ENCODE measurements at regions of chr7 and their contacts with region 1.

Region 1: DNA sequence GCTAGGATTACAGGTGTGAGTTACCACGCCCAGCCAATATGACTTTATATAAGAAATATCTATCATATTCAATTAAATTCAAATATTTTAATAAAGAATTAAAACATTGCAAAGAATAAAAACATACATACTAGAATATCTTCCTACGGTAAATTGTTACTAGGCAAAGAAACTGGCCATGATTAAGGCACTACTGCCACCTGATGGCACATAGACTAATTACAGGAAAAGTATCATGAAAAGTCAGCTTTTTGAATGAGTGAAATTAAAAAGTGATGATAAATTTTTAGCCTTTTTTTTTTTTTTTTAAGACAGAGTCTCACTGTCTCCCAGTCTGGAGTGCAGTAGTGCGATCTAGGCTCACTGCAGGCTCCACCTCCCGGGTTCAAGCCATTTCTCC is 30.9 kb downstream of the MRPS33 start:
- DNase-seq: no peak
- H3K4me3 ChIP-seq: no peak overlapping the region
- H3K27ac ChIP-seq: no peak overlapping the region
- H3K4me1 ChIP-seq: no peaks in the 10 kb centered on the region
- H3K27me3 ChIP-seq: no peaks in the 10 kb centered on the region
- CTCF ChIP-seq: peak in 2 of 3 experiments; percentile 32 to 48; a peak in 2 of 4 replicates
- EP300 ChIP-seq: no peak
- POLR2A ChIP-seq: no peak
- RAD21 ChIP-seq: peak; percentile 71 to 76

Region 2: GRCh38 chr7:140691368-140692045 is 292.3 kb before region 1 on chr7:
- CTCF ChIA-PET with region 1: interaction called, 12 read pairs
- POLR2A ChIA-PET with region 1: no interaction called
- DNase-seq: no peak
- H3K4me3 ChIP-seq: no peak overlapping the region
- H3K27ac ChIP-seq: no peak overlapping the region
- H3K4me1 ChIP-seq: peaks cover 0 to 3% (median 1%) of the 10 kb centered on the region in 4 experiments; a peak in 2 of 7 replicates
- H3K27me3 ChIP-seq: no peaks in the 10 kb centered on the region
- CTCF ChIP-seq: peak; percentile 50 to 67 (median 61)
- EP300 ChIP-seq: no peak
- POLR2A ChIP-seq: no peak
- RAD21 ChIP-seq: peak; percentile 57 to 71

Region 3: GRCh38 chr7:140726281-140726680 is 257.5 kb before region 1 on chr7:
- CTCF ChIA-PET with region 1: interaction called, 11 read pairs
- POLR2A ChIA-PET with region 1: interaction called, 4 read pairs
- DNase-seq: no peak
- H3K4me3 ChIP-seq: no peak overlapping the region
- H3K27ac ChIP-seq: no peak overlapping the region
- H3K4me1 ChIP-seq: no peaks in the 10 kb centered on the region
- H3K27me3 ChIP-seq: no peaks in the 10 kb centered on the region
- CTCF ChIP-seq: peak in 2 of 3 experiments; percentile 21 to 51; a peak in 1 of 4 replicates
- EP300 ChIP-seq: no peak
- POLR2A ChIP-seq: no peak
- RAD21 ChIP-seq: peak; percentile 50 to 60

Region 4: GRCh38 chr7:140745266-140746058 is 238.3 kb before region 1 on chr7:
- CTCF ChIA-PET with region 1: interaction called, 14 read pairs
- POLR2A ChIA-PET with region 1: no interaction called
- DNase-seq: no peak
- H3K4me3 ChIP-seq: no peak overlapping the region
- H3K27ac ChIP-seq: no peak overlapping the region
- H3K4me1 ChIP-seq: no peaks in the 10 kb centered on the region
- H3K27me3 ChIP-seq: no peaks in the 10 kb centered on the region
- CTCF ChIP-seq: no peak
- EP300 ChIP-seq: no peak
- POLR2A ChIP-seq: no peak
- RAD21 ChIP-seq: no peak

Region 5: DNA sequence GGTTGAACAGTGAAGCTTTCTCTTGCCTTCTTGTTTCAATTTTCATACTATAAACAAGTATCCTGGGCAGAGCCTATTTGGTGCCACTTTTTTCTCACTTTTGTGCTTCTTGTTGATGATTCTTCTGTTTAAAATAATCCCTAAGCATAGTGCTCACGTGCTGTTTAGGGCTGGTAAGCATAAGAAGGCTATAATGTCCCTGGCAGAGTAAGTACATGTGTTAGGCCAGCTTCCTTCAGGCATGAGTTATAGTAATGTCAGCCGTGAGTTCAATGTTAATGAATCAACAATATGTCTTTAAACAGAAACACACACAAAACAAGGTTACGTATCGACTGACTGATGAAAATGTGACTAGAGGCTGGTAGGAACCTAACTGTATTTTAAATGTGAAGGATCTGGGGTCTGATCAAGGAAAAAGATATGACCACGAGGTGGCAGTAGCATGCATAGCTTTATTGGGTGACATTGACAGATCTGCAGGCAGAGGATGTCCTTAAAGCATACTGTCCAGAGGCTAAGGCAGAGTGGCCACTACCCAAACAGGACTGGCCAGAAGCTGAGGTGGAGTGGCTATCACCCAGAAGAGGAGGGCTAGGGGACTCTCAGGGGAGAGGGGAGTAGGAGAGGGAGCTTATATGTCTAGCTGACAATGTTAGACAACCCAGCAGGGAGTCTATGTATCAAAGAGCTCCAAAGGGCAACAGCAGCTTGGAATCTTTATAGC is 172.8 kb before region 1 on chr7:
- CTCF ChIA-PET with region 1: interaction called, 34 read pairs
- POLR2A ChIA-PET with region 1: interaction called, 3 read pairs
- DNase-seq: peak in 1 of 2 experiments; percentile 73
- H3K4me3 ChIP-seq: no peak overlapping the region
- H3K27ac ChIP-seq: no peak overlapping the region
- H3K4me1 ChIP-seq: no peaks in the 10 kb centered on the region
- H3K27me3 ChIP-seq: no peaks in the 10 kb centered on the region
- CTCF ChIP-seq: peak in 2 of 3 experiments; percentile 73 to 80; a peak in 3 of 4 replicates
- EP300 ChIP-seq: no peak
- POLR2A ChIP-seq: no peak
- RAD21 ChIP-seq: peak; percentile 78 to 80

Region 6: DNA sequence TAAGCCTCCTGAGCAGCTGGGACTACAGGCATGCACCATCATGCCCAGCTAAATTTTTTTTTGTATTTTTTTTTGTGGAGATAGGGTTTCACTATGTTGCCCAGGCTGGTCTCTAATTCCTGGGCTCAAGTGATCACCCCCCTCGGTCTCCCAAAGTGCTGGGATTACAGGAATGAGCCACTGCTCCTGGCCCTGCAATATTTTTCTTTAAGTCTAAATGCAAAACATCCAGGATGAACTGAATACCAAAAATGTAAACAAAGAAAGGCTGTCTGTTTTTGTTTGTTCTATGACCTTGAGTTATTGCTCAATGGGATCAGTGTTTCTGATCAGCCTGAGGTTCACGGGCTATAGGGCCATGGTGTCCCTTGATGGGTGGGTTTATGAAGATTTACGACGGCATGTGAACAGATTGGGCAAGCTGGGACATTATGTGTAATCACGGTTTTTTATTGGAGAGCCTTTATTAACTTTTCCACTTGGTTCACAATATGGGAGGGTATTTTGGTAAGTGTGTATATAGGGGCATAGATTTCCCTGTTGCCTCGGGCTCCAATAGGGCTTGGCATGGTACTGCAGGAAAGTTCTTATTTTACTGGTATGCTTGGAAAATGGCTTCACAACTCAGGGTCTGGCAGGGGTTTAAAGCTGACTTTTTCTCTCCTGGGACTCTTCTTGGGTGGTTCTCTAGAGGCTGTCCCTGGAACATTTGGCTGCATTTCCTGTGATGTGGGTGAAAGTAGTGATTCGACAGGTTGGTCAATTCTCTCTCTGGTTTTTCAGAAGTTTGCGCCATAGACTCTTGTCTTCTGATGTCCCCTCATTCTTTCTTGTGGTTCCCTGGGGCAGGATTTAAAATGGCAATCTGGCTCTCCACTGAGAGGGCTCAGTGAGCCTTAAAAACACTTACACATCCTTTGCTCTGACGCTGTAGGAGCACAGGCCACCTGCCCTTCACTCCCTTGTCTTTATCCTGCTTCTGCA is 10.6 kb before region 1 on chr7:
- CTCF ChIA-PET with region 1: interaction called, 36 read pairs
- POLR2A ChIA-PET with region 1: interaction called, 5 read pairs
- DNase-seq: no peak
- H3K4me3 ChIP-seq: no peak overlapping the region
- H3K27ac ChIP-seq: no peak overlapping the region
- H3K4me1 ChIP-seq: no peaks in the 10 kb centered on the region
- H3K27me3 ChIP-seq: no peaks in the 10 kb centered on the region
- CTCF ChIP-seq: no peak
- EP300 ChIP-seq: no peak
- POLR2A ChIP-seq: no peak
- RAD21 ChIP-seq: no peak

Region 7: GRCh38 chr7:141014524-141015395 is 31.0 kb after region 1 on chr7 and contains the start of gene MRPS33:
- CTCF ChIA-PET with region 1: interaction called, 10 read pairs
- POLR2A ChIA-PET with region 1: no interaction called
- DNase-seq: peak; percentile 94 to 95
- H3K4me3 ChIP-seq: peak within 1 kb of the TSS; percentile 56 to 90 (median 76)
- H3K27ac ChIP-seq: peak within 1 kb of the TSS; percentile 90
- H3K4me1 ChIP-seq: no peaks in the 10 kb centered on the region; a peak in 1 of 7 replicates
- H3K27me3 ChIP-seq: no peaks in the 10 kb centered on the region
- CTCF ChIP-seq: peak; percentile 76 to 83 (median 82)
- EP300 ChIP-seq: peak in 1 of 2 experiments; percentile 47; a peak in 1 of 3 replicates
- POLR2A ChIP-seq: peak; percentile 99
- RAD21 ChIP-seq: peak; percentile 30 to 36
- total RNA-seq, gene MRPS33: 62.6 and 66.4 TPM in 2 replicates

Measured in H1 (cell line).